GM10248 (cell line): ENCODE measurements at regions of chr14 and their contacts with region 1.

Region 1: DNA sequence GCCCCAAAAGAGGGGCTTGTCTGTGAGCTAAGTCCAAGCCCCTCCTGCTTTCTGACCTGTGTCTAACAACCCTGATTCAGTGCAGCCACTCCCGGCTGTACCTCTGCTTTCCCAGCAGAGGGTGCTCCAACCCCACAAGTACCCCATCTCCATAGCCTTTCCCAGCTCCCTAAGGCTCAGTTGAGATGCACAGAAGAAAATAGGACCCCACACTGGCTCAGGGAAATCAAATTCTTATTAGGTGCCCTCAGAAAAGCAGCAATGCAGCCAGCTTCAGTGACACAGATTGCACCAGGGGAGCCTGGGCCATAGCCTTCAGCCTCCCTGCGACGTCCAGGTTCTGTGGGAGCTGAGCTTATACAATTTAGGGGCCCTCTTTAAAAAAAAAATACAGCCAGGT is 49.9 kb downstream of the LRRC74A start:
- DNase-seq: peak; percentile 78
- CTCF ChIP-seq: peak; percentile 94

Region 2: DNA sequence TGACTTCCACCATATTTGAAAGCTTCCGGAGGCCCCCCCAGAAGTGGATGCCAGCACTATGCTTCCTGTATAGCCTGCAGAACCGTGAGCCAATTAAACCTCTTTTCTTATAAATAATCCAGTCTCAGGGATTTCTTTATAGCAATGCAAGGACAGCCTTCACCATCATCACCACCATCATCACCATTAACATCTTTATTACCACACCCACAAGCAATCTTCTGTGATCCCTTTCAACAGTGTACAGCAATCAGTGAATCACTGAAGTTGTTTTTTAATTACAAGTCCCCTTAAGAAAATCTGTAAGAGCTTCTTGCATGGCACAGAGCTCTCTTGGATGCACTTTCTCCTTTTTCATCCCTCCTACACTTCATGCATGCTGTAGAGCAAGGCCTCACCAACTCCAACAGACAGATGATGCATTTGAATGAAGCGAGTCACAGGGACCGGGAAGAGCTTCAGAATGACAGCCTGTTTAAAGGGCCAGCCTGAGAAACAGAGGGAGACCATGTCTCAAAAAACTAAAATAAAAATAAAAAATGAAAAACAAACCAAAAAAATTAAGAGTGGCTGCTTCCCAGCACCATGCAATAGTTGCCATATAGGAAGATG is 198.4 kb before region 1 on chr14:
- CTCF ChIA-PET with region 1: no interaction called
- POLR2A ChIA-PET with region 1: no interaction called
- DNase-seq: no peak
- CTCF ChIP-seq: no peak

Region 3: DNA sequence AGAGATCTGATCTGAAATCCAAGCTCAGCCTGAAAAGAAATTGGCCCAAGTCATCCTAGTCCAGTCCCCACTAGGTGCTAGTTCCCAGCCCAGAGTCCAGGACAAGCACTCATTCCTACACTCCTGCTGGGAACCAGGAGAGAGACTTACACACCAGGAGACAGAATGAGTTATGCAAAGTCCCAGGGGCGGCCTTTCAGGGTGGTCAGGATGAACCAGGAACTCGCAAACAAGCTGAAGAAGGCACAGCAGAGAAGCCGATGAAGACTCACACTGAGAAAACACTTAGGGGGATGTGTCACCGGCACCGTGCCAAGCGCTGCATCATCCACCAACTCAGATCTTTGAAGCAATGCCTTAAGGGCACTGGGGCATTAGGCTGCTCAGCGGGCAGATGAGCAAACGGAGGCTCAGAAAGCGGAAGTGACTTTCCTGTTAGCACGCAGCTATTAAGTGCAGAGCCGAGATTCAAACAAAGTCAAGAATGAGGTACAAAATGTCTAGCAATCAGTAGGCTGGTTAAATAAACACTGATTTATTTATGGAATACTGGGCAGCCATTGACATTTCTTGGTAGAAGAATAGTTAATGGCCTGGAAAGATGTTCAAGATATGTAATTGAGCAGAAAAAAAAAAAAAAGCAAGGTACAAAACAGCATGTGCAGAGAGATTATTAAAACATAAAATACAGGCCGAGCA is 28.8 kb after region 1 on chr14:
- CTCF ChIA-PET with region 1: interaction called, 17 read pairs
- POLR2A ChIA-PET with region 1: no interaction called
- DNase-seq: peak; percentile 75
- CTCF ChIP-seq: no peak

Region 4: GRCh38 chr14:77040059-77040740 is 164.1 kb after region 1 on chr14:
- CTCF ChIA-PET with region 1: interaction called, 11 read pairs
- POLR2A ChIA-PET with region 1: no interaction called
- DNase-seq: peak; percentile 69
- CTCF ChIP-seq: no peak

Region 5: DNA sequence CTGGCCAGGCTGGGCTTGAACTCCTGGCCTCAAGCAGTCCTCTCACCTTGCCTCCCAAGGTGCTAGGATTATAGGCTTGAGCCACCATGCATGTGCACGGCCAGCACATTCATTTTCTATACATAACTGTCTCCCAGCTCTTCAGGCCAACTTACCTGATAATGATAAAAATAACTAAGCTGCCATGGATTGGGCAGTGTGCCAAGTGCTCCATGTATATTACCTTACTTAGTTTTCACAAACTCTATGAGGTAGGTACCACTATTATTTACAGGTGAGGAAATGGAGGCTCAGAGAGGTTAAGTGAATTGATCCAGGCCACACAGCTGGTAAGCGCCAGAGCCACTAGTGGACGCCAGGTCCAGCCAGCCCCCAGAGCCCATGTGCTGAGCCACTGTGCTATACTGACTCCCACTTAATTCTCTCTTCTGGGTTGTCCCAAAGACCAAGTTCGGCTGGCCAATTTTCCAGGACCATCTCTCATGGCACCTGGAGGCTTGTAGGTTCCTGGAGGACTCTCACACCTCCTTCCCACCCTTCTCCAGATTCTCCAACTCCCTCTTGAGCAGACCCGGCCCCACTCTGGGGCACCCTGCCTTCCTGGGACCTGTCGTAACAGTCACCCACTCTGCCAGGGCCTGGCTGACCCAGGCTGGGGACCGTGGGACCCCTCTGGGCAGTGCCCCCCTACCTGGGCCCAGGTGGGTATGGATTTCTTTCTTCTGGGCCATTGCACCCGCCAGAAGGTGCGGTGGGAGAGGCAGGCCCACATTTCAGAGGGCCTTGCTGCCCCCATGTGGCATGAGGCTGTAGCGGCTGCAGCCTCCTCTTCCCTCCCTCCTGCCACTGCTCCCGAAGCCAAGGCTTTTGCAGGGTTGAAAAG is 191.8 kb after region 1 on chr14:
- CTCF ChIA-PET with region 1: interaction called, 586 read pairs
- POLR2A ChIA-PET with region 1: no interaction called
- DNase-seq: peak; percentile 77
- CTCF ChIP-seq: peak; percentile 94

Region 6: GRCh38 chr14:77124345-77125280 is 248.5 kb after region 1 on chr14:
- CTCF ChIA-PET with region 1: interaction called, 19 read pairs
- POLR2A ChIA-PET with region 1: no interaction called
- DNase-seq: peak; percentile 79
- CTCF ChIP-seq: peak; percentile 89